Ascending aorta (tissue), 2 donors: ENCODE measurements at regions of chr3 and their contacts with region 1.

Region 1: GRCh38 chr3:148379763-148380382 is 317.8 kb upstream of the AGTR1 start:
- DNase-seq: no peak
- H3K4me3 ChIP-seq: no peak overlapping the region
- H3K27ac ChIP-seq: no peak overlapping the region
- H3K4me1 ChIP-seq: no peaks in the 10 kb centered on the region
- H3K27me3 ChIP-seq: no peaks in the 10 kb centered on the region
- CTCF ChIP-seq: peak; percentile 28 to 59 (median 39)

Region 2: DNA sequence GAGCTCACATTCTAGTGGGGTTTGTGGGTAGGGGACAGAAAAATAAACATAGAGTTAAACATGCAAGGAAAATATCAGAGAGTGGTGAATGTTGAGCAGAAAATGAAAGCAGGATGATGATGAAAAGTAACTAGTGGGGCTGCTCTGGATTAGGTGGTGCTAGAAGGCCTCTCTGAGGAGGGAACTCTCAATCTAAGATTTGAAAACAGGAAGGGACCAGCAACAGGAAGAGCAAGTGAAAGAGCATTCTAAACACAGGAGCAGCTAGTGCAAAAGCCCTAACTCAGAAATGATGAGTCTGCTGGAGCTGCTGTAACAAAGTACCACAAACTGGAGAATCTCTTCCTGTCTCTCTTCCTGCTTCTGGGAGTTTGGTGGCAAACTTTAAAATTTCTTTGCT is 150.8 kb before region 1 on chr3:
- intact Hi-C with region 1: no loop called
- DNase-seq: no peak
- H3K4me3 ChIP-seq: no peak overlapping the region
- H3K27ac ChIP-seq: no peak overlapping the region
- H3K4me1 ChIP-seq: no peaks in the 10 kb centered on the region
- H3K27me3 ChIP-seq: no peaks in the 10 kb centered on the region
- CTCF ChIP-seq: no peak

Region 3: DNA sequence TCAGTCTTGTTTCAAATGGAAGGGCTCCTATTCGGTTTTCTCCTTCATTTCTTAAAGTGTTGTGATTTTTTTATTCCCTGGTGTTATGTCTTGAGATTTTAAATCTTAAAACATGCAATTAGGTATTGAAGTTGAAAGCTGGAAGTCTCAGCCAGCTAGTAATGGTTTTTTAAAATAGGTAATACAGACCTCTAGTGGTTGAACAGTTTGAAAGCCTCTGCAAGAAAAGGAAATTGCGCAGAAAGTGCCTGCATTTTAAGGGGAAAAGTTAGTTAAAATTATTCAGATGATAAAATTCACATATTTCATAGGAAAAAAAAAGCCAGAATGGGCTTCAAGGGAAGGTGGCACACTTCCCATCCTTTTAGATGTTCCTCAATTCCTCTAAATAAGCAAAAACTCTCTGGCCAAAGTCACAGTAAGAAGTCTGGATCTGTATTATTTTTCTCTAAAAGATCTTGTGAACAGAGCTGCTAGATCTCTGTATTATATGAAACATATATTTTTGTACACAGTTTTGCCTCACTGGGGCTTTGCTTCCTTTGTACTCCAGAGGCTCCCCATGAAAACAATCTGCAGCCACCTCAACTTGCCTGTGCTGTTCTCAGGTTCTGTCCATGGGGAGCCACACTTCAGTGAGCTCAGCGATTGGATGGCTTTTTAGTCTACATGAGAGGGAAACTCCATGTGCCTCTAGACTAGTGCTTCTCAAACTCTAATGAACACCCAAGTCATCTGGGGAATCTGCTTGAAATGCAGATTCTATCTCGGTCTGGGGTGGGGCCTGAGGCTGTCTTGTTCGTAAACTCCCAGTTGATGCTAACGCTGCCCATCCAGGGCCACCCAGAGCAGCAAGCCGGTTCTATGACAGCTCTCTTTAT is 339.3 kb after region 1 on chr3:
- intact Hi-C with region 1: loop called (anchors 1 kb)
- DNase-seq: no peak
- H3K4me3 ChIP-seq: no peak overlapping the region
- H3K27ac ChIP-seq: no peak overlapping the region
- H3K4me1 ChIP-seq: no peaks in the 10 kb centered on the region
- H3K27me3 ChIP-seq: no peaks in the 10 kb centered on the region
- CTCF ChIP-seq: peak in 2 of 3 experiments; percentile 51 to 66